GM10248 (cell line): ENCODE measurements at regions of chr22 and their contacts with region 1.

Region 1: GRCh38 chr22:24503137-24503842 is 8.2 kb downstream of the UPB1 start:
- DNase-seq: peak; percentile 87
- CTCF ChIP-seq: peak; percentile 76

Region 2: DNA sequence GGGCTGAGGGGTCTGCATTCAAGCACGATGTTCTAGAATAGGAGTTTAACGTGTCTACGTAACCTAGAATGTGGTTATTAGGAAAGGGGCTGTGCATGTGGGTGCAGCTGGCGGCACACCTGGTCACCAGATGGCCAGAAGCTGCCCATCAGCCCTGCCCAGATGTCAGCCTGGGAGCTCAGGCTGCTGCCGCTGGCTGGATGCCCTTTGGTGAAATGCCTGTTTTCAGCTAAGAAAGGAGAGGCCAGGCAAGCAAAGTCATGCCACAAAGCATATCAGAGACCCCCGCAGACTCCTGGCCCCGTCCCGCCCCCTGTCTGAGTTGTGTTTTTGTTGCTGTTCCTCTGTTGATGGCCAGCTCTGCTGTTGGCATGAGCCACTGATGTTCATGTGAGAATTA is 87.2 kb before region 1 on chr22:
- CTCF ChIA-PET with region 1: interaction called, 11 read pairs
- POLR2A ChIA-PET with region 1: no interaction called
- DNase-seq: no peak
- CTCF ChIP-seq: no peak

Region 3: GRCh38 chr22:24482575-24482974 is 20.7 kb before region 1 on chr22:
- CTCF ChIA-PET with region 1: interaction called, 14 read pairs
- POLR2A ChIA-PET with region 1: no interaction called
- DNase-seq: no peak
- CTCF ChIP-seq: no peak

Region 4: GRCh38 chr22:24516301-24516737 is 13.0 kb after region 1 on chr22:
- CTCF ChIA-PET with region 1: interaction called, 41 read pairs
- POLR2A ChIA-PET with region 1: no interaction called
- DNase-seq: peak; percentile 52
- CTCF ChIP-seq: no peak

Region 5: GRCh38 chr22:24525416-24526037 is 22.2 kb after region 1 on chr22:
- CTCF ChIA-PET with region 1: interaction called, 41 read pairs
- POLR2A ChIA-PET with region 1: no interaction called
- DNase-seq: peak; percentile 85
- CTCF ChIP-seq: peak; percentile 90